ENCODE measurements at regions of chrX and their contacts with region 1.

Region 1: DNA sequence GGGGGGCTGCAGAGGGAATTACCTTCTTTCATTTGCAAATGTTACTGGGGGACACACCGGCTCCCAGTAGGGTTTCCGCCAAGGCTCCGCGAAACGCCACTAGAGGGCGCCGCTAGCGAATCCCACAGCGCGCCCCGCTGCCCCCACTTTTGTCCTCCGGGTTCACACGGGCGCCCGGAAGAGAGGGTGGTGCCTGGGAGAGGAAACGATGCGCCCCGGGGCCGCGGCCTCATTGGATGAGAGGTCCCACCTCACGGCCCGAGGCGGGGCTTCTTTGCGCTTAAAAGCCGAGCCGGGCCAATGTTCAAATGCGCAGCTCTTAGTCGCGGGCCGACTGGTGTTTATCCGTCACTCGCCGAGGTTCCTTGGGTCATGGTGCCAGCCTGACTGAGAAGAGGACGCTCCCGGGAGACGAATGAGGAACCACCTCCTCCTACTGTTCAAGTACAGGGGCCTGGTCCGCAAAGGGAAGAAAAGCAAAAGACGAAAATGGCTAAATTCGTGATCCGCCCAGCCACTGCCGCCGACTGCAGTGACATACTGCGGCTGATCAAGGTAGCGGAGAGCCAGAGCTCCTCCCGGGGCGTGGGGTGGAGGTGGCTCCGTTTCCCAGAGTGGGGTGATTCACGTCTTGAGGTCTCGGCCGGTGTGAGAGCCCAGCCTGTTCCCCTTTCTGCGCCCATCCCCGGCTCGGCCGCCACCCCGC is at the start of gene SAT1:
- DNase-seq: peak; percentile 97
- ATAC-seq: peak; percentile 95
- total RNA-seq, gene SAT1: 145 TPM

Region 2: DNA sequence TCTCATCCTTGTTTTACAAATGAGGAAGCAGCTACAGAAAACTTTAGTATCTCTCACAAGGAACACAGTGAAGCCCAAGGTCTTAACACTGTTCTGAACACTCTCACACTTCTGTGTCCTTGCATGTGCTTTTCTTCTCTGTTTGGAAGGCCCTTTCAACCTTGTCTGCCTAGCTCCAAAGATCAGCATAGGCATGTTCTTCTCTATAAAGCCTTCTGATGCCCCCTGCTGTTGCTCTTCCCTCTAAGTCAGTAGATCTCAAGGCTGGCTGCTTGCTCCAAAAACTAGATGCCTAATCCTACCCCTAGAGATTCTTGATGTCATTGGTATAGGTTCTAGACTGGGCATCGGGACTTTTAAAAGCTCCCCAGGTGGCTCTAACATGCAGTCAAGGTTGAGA is 118.8 kb after region 1 on chrX:
- intact Hi-C with region 1: loop called (anchors 2 kb)
- DNase-seq: no peak
- ATAC-seq: peak; percentile 94

Region 3: DNA sequence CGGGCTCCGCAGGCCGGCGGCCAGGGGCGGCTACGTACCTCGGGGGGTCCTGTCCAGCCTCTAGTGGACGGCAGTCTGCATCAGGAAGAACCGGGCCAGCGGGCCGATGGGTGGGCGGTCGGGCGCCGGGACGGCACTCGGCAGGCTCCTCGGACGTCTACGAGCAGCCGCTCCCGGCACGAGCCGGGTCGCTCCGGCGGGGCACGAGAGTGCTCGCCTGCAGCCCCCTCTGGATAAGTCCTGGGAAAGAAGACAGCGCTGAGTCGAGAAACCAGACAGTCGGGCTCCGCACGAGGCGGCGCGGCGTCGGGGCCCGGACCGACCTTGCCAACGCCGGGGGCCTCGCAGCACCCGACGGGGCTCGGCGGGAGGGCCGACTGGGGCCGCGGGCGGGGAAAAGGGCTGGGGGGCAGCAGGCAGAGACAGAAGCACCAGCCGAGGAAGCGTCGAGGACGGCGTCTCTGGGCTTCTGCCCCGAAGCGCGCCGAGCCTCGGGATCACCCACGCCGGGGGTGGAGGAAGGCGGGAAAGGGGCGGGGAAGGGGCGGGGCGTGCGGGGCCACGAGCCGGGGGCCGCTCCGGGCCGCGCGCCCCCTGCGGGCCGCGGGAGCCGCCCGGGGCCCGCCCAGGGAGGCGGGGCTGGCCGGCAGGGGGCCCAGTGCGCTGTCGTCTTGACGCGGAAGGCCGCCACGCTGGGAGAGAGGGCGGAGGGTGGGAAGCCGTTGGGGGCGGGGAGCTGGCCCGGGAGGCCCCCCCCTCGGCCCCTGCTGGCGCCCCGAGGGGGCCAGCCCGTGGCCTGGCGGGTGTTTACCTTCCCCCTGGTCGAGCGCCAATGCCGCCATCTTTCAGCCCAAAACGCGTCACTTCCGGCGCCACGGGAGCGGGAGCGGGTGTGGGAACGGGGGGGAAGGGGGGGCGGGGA is 242.1 kb after region 1 on chrX:
- intact Hi-C with region 1: loop called (anchors 10 kb)
- DNase-seq: peak; percentile 92
- ATAC-seq: peak; percentile 94